CD8-positive, alpha-beta T cell (primary cell): ENCODE measurements at regions of chr12 and their contacts with region 1.

Region 1: DNA sequence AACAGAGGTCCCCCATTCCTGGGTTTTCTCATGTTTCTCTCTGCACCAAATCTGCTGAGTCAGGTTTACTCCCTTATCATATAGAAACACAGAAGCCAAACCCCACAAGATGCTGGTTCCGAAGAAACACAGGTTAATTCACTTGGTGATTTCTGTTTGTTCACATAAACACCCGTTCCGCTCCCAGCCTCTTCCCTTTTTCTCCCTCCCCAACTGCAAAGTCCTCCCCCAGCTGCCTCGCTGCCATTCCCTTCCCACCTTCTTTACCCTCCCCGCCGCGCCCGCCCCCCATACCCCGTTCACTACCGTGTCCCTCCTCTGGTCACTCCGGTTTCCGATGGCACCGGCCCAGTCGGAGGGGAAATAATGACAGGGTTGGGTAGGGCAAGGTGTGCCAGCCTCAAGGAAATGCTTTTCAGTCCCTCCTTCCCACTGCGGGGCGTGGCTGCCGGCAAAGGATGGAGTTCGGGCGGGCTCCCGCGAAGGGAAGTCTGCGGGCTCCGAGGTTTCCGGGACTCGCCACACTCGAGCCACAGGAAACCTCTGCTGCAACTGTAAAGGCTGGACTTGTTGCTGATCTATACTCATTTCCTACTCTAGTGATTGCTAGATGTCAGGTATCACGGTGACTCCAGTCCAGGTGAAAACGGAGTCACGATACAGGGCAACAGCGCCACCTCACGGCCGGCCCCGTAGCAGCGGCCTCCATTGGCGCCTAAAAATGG is at the start of gene STYK1:
- DNase-seq: peak; percentile 64 to 89 (median 76)
- ATAC-seq: peak; percentile 72
- H3K4me3 ChIP-seq: peak within 1 kb of the TSS; percentile 41 to 57
- H3K4me3 Mint-ChIP-seq: peak within 1 kb of the TSS; percentile 82
- H3K27ac ChIP-seq: peak within 1 kb of the TSS; percentile 50 to 75
- H3K27ac Mint-ChIP-seq: peak within 1 kb of the TSS; percentile 92
- H3K4me1 ChIP-seq: peaks cover 25% of the 10 kb centered on the region
- H3K4me1 Mint-ChIP-seq: peaks cover 43% of the 10 kb centered on the region
- H3K27me3 ChIP-seq: no peaks in the 10 kb centered on the region
- H3K27me3 Mint-ChIP-seq: peaks cover 7% of the 10 kb centered on the region
- CTCF ChIP-seq: peak; percentile 95
- total RNA-seq, gene STYK1: 0.57 to 0.89 TPM

Region 2: GRCh38 chr12:9906873-9907272 is 766.9 kb before region 1 on chr12:
- CTCF ChIA-PET with region 1: no interaction called
- POLR2A ChIA-PET with region 1: no interaction called
- intact Hi-C with region 1: no loop called
- DNase-seq: peak in 8 of 9 experiments; percentile 15 to 86 (median 59)
- ATAC-seq: peak; percentile 96
- H3K4me3 ChIP-seq: peak overlapping the region in 1 of 2 experiments; percentile 8
- H3K4me3 Mint-ChIP-seq: peak overlapping the region; percentile 49
- H3K27ac ChIP-seq: peak overlapping the region in 1 of 2 experiments; percentile 3
- H3K27ac Mint-ChIP-seq: peak overlapping the region; percentile 82
- H3K4me1 ChIP-seq: peaks cover 28% of the 10 kb centered on the region
- H3K4me1 Mint-ChIP-seq: peaks cover 36% of the 10 kb centered on the region
- H3K27me3 ChIP-seq: no peaks in the 10 kb centered on the region
- H3K27me3 Mint-ChIP-seq: no peaks in the 10 kb centered on the region
- CTCF ChIP-seq: no peak

Region 3: DNA sequence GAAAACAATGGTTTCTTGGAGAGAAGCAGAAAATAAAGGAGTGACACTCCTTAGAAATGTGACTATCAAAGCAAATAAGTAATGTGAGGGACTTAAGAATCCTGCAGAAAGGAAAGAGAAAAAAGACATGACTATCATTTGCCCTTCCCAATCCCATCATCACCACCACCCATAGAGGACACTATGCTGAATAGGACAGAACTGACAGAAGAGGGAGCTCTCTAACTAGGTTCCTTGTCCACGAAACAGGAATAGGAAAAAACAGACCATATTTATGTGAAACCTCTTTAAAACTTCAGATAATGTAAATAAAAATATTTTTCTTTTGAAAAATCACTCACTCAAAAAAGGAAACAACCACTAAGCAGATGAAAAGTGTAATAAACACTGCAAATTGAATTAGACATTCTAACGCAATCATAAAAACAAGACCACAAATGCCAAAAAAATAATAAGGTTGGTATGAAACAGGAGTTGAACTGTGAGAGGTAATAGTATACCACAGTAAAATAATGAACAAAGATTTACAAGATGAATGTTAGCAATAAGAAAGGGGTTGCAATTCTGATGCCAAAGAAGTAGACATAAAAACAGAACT is 342.1 kb before region 1 on chr12:
- CTCF ChIA-PET with region 1: no interaction called
- POLR2A ChIA-PET with region 1: no interaction called
- intact Hi-C with region 1: loop called (anchors 1 to 2 kb)
- DNase-seq: peak in 3 of 9 experiments; percentile 8 to 77 (median 63)
- ATAC-seq: no peak
- H3K4me3 ChIP-seq: no peak overlapping the region
- H3K4me3 Mint-ChIP-seq: peak overlapping the region; percentile 26
- H3K27ac ChIP-seq: no peak overlapping the region
- H3K27ac Mint-ChIP-seq: no peak overlapping the region
- H3K4me1 ChIP-seq: peaks cover 6% of the 10 kb centered on the region
- H3K4me1 Mint-ChIP-seq: peaks cover 10% of the 10 kb centered on the region
- H3K27me3 ChIP-seq: no peaks in the 10 kb centered on the region
- H3K27me3 Mint-ChIP-seq: no peaks in the 10 kb centered on the region
- CTCF ChIP-seq: peak; percentile 51

Region 4: DNA sequence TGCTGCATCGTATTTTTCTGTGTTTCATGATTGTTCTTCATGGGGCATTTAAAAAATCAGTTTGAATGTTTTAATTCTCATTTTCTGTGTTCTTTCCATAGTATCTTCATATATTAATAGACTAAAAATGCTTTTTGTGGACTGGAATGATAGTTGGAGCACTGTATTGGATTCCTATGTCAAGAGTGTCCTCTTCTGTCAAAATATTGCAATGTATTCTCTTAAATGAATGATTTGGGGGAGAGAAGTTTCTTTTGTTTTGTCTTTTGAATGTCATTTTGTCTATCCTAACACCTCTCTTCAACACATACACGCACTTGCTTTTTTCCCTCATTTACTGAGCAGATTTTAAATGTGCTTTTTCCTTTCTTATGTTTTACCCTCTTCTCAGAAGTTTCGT is 172.8 kb before region 1 on chr12:
- CTCF ChIA-PET with region 1: no interaction called
- POLR2A ChIA-PET with region 1: no interaction called
- intact Hi-C with region 1: loop called in 1 of 2 experiments (anchors 1 kb)
- DNase-seq: peak in 2 of 9 experiments; percentile 36 to 59
- ATAC-seq: no peak
- H3K4me3 ChIP-seq: no peak overlapping the region
- H3K4me3 Mint-ChIP-seq: peak overlapping the region; percentile 57
- H3K27ac ChIP-seq: no peak overlapping the region
- H3K27ac Mint-ChIP-seq: peak overlapping the region; percentile 82
- H3K4me1 ChIP-seq: peaks cover 56% of the 10 kb centered on the region
- H3K4me1 Mint-ChIP-seq: peaks cover 51% of the 10 kb centered on the region
- H3K27me3 ChIP-seq: no peaks in the 10 kb centered on the region
- H3K27me3 Mint-ChIP-seq: no peaks in the 10 kb centered on the region
- CTCF ChIP-seq: no peak

Region 5: DNA sequence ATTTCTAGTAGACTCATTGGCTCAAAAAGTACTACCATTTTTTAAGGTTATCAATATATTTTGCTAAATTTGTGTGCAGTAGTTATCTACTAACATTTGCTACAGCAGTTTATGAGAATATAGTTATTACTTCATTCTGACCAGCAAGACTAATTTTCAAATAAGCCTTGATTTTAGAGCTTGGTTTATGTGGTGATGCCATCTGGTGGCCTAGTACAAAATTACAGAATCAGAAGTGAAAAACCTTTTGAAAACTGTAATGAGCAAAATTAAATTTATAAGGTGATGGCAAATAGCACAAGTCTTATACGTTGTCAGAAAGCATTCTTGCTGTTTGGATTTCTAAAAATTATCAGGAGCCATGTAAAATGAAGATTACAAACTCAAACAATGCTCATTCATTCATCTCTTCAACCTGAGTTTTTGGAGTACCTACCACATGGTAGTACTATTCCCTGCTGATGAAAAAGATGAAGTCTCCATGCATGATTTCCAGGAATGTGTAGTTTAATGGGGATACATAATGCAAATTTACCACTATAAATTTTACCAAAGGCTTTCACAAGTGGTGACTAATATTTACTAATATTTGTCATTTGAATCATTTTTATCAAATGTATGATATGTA is 111.4 kb before region 1 on chr12:
- CTCF ChIA-PET with region 1: no interaction called
- POLR2A ChIA-PET with region 1: interaction called, 3 read pairs
- intact Hi-C with region 1: loop called (anchors 2 kb)
- DNase-seq: peak in 4 of 9 experiments; percentile 29 to 79 (median 62)
- ATAC-seq: no peak
- H3K4me3 ChIP-seq: no peak overlapping the region
- H3K4me3 Mint-ChIP-seq: peak overlapping the region; percentile 11
- H3K27ac ChIP-seq: no peak overlapping the region
- H3K27ac Mint-ChIP-seq: peak overlapping the region; percentile 80
- H3K4me1 ChIP-seq: peaks cover 70% of the 10 kb centered on the region
- H3K4me1 Mint-ChIP-seq: peaks cover 83% of the 10 kb centered on the region
- H3K27me3 ChIP-seq: no peaks in the 10 kb centered on the region
- H3K27me3 Mint-ChIP-seq: no peaks in the 10 kb centered on the region
- CTCF ChIP-seq: peak; percentile 98

Region 6: DNA sequence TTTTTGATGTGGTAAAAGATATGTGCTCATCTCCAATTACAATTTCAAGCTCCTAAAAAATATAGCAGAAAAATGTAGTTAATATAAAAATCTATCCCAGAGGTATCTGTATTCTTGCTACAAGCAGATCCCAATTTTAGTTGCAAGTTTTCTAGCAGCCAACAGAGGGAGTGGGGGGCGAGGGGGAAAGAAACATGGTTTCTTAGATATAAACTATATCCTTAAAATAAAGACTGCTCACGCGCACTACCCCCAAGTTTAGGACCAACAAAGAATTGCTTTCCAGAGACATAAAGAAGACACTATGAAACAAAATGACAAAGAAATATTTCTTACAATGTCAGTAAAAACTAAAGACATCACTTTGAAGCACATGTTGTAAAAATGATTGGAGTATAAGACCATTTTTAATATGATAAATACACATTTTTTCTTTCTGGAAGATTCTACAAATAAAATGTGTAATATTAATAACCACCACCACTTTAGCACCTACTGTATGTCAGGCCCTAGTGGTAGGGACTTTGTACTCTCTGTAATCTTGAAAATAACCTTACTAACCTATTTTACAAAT is 65.8 kb before region 1 on chr12:
- CTCF ChIA-PET with region 1: interaction called, 3 read pairs
- POLR2A ChIA-PET with region 1: interaction called, 3 read pairs
- intact Hi-C with region 1: loop called (anchors 1 to 2 kb)
- DNase-seq: peak in 4 of 9 experiments; percentile 8 to 41 (median 24)
- ATAC-seq: no peak
- H3K4me3 ChIP-seq: no peak overlapping the region
- H3K4me3 Mint-ChIP-seq: no peak overlapping the region
- H3K27ac ChIP-seq: no peak overlapping the region
- H3K27ac Mint-ChIP-seq: no peak overlapping the region
- H3K4me1 ChIP-seq: peaks cover 12% of the 10 kb centered on the region
- H3K4me1 Mint-ChIP-seq: peaks cover 37% of the 10 kb centered on the region
- H3K27me3 ChIP-seq: no peaks in the 10 kb centered on the region
- H3K27me3 Mint-ChIP-seq: no peaks in the 10 kb centered on the region
- CTCF ChIP-seq: peak; percentile 44

Region 7: GRCh38 chr12:10721651-10722501 is 48.1 kb after region 1 on chr12:
- CTCF ChIA-PET with region 1: no interaction called
- POLR2A ChIA-PET with region 1: no interaction called
- intact Hi-C with region 1: loop called (anchors 1 to 2 kb)
- DNase-seq: peak; percentile 26 to 96 (median 63)
- ATAC-seq: peak; percentile 75
- H3K4me3 ChIP-seq: peak overlapping the region; percentile 69 to 72
- H3K4me3 Mint-ChIP-seq: peak overlapping the region; percentile 91
- H3K27ac ChIP-seq: peak overlapping the region; percentile 86 to 94
- H3K27ac Mint-ChIP-seq: peak overlapping the region; percentile 93
- H3K4me1 ChIP-seq: peaks cover 25% of the 10 kb centered on the region
- H3K4me1 Mint-ChIP-seq: peaks cover 50% of the 10 kb centered on the region
- H3K27me3 ChIP-seq: peaks cover 0 to 6% of the 10 kb centered on the region in 2 experiments
- H3K27me3 Mint-ChIP-seq: peaks cover 15% of the 10 kb centered on the region
- CTCF ChIP-seq: no peak

Region 8: DNA sequence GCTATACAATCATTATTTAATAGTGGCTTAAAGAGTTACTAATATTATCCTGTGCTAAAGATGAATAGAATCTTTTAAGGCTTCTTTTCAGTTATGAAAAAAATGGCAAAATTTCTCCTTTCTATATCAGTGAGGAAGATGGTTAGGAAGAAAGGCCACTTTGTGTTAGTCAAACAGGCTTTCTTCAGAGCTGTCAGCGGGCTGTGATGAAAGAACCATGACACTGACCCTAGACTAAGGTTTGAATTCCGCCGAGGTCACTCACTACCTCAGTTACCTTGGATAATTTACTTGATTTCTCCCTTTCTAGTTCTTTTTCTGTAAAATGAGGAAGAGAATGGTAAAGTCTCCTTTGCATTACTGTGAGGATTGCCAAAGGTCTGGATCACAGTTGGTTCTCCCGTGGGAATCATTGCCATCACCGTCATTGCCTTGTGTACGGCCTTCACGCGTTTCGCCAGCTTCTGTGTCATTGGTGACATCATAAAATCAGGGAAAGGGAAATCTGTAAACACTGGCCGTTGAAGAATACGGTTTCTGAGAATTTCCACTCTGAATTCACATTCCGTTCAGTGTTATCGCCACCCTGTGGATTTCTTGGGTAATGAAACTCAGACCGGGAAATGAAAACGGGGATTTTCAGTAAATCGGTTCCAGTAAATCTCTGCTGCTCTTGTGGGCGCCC is 76.0 kb after region 1 on chr12:
- CTCF ChIA-PET with region 1: interaction called, 10 read pairs
- POLR2A ChIA-PET with region 1: no interaction called
- intact Hi-C with region 1: loop called (anchors 2 to 5 kb)
- DNase-seq: peak; percentile 43 to 89 (median 71)
- ATAC-seq: peak; percentile 100
- H3K4me3 ChIP-seq: peak overlapping the region in 1 of 2 experiments; percentile 21
- H3K4me3 Mint-ChIP-seq: peak overlapping the region; percentile 36
- H3K27ac ChIP-seq: no peak overlapping the region
- H3K27ac Mint-ChIP-seq: no peak overlapping the region
- H3K4me1 ChIP-seq: peaks cover 4% of the 10 kb centered on the region
- H3K4me1 Mint-ChIP-seq: peaks cover 6% of the 10 kb centered on the region
- H3K27me3 ChIP-seq: no peaks in the 10 kb centered on the region
- H3K27me3 Mint-ChIP-seq: peaks cover 25% of the 10 kb centered on the region
- CTCF ChIP-seq: peak; percentile 97

Region 9: DNA sequence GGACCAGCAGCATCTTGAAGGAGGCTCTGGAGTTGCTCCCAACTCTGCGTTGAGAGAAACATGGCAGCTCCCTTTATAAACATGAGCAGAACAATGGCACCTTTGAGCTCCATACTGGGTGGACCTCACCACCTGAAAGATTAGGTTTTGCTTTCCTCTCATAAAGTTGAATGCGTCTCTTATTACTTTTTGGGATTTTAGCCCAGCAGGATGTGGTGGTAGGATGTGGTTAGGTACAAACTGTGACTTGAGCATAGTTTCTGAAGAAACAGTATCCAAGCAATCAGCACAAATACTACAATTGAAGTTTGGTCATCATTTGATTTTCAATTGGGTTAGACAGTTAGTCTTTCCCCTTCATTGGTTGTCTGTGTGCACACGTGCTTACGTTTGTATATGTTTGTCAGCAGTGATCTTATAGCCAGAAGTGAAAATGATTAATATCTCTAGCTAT is 175.6 kb after region 1 on chr12 and contains the start of gene PRR4:
- CTCF ChIA-PET with region 1: no interaction called
- POLR2A ChIA-PET with region 1: no interaction called
- intact Hi-C with region 1: no loop called
- DNase-seq: peak in 2 of 9 experiments; percentile 18 to 55
- ATAC-seq: peak; percentile 34
- H3K4me3 ChIP-seq: no peak within 1 kb of the TSS
- H3K4me3 Mint-ChIP-seq: no peak within 1 kb of the TSS
- H3K27ac ChIP-seq: no peak within 1 kb of the TSS
- H3K27ac Mint-ChIP-seq: no peak within 1 kb of the TSS
- H3K4me1 ChIP-seq: peaks cover 29% of the 10 kb centered on the region
- H3K4me1 Mint-ChIP-seq: peaks cover 40% of the 10 kb centered on the region
- H3K27me3 ChIP-seq: no peaks in the 10 kb centered on the region
- H3K27me3 Mint-ChIP-seq: no peaks in the 10 kb centered on the region
- CTCF ChIP-seq: no peak
- total RNA-seq, gene PRR4: not detected